ENCODE measurements at regions of chr3 and their contacts with region 1.

Region 1: DNA sequence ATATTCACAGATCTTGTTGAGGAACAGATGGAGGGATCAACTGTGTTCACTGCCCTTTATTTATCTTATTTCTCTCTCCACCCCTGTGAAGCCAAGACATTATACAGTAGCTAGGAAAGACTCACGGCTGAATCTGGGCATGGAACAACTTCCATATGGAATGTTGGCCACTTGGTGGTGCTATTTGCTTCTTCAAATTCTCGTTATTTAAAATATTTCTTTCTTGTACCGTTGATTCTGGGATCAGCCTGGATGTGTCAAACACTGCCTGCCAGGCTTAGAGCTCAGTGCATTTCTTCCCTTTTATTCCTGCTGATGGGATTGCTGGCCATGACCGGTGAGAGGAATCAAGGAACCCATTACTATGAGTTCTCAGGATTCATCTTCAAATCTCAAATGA is 17.5 kb upstream of the GASK1A start:
- DNase-seq: peak; percentile 6 to 30
- ATAC-seq: peak; percentile 66; a peak in 5 of 6 replicates
- H3K4me3 ChIP-seq: no peak overlapping the region
- H3K27ac ChIP-seq: no peak overlapping the region
- H3K4me1 ChIP-seq: no peaks in the 10 kb centered on the region
- CTCF ChIP-seq: peak; percentile 64
- EP300 ChIP-seq: no peak
- POLR2A ChIP-seq: no peak
- RAD21 ChIP-seq: peak; percentile 62 to 66

Region 2: GRCh38 chr3:42942693-42943092 is 18.9 kb before region 1 on chr3:
- CTCF ChIA-PET with region 1: no interaction called
- POLR2A ChIA-PET with region 1: no interaction called
- DNase-seq: no peak
- ATAC-seq: no peak
- H3K4me3 ChIP-seq: no peak overlapping the region
- H3K27ac ChIP-seq: no peak overlapping the region
- H3K4me1 ChIP-seq: no peaks in the 10 kb centered on the region
- CTCF ChIP-seq: no peak
- EP300 ChIP-seq: no peak
- POLR2A ChIP-seq: no peak
- RAD21 ChIP-seq: no peak

Region 3: GRCh38 chr3:42979044-42979972 is 17.7 kb after region 1 on chr3 and contains the start of gene GASK1A:
- CTCF ChIA-PET with region 1: interaction called, 12 read pairs
- POLR2A ChIA-PET with region 1: no interaction called
- DNase-seq: no peak
- ATAC-seq: peak; percentile 47 to 64; a peak in 4 of 6 replicates
- H3K4me3 ChIP-seq: peak within 1 kb of the TSS; percentile 39
- H3K27ac ChIP-seq: no peak within 1 kb of the TSS
- H3K4me1 ChIP-seq: no peaks in the 10 kb centered on the region
- CTCF ChIP-seq: no peak
- EP300 ChIP-seq: no peak
- POLR2A ChIP-seq: no peak
- RAD21 ChIP-seq: no peak
- polyA plus RNA-seq, gene GASK1A: not detected in 2 replicates

Region 4: DNA sequence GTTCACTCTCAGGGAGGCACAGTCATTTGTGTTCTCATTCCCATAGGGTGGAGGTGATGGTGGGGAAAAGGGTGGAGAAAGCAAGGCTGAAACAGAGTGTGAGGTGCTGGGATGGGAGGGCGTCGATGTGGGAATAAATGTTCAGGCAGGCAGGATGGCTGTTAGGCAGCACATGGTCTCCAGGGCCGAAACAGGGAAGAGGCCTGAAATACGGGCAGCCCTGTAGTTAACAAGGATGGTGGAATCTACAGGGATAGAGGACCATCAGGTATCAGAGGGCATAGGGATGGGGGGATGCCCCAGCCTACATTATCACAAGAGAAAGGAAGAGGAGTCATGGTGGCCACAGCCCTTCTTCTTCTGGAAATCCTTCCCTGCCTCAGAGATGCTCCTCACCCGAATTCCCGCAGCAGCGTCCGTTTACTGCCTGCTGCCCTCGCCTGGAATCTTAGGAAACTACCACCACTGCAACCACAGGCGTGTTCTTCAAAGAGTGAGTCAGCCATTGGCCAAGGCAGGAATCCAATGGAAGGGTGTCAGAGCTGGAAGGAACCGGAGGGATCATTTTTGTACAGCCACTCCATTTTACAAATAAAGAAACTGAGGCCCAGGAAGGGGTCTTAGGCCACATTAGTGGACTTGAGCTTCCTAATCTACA is 194.0 kb after region 1 on chr3:
- CTCF ChIA-PET with region 1: interaction called, 33 read pairs
- POLR2A ChIA-PET with region 1: no interaction called
- DNase-seq: peak; percentile 50 to 54
- ATAC-seq: peak; percentile 93 to 98
- H3K4me3 ChIP-seq: no peak overlapping the region
- H3K27ac ChIP-seq: no peak overlapping the region
- H3K4me1 ChIP-seq: no peaks in the 10 kb centered on the region
- CTCF ChIP-seq: peak; percentile 36; the same call in 2 of the 3 replicates
- EP300 ChIP-seq: no peak
- POLR2A ChIP-seq: no peak
- RAD21 ChIP-seq: peak; percentile 42 to 57; a peak in 3 of 5 replicates

Region 5: DNA sequence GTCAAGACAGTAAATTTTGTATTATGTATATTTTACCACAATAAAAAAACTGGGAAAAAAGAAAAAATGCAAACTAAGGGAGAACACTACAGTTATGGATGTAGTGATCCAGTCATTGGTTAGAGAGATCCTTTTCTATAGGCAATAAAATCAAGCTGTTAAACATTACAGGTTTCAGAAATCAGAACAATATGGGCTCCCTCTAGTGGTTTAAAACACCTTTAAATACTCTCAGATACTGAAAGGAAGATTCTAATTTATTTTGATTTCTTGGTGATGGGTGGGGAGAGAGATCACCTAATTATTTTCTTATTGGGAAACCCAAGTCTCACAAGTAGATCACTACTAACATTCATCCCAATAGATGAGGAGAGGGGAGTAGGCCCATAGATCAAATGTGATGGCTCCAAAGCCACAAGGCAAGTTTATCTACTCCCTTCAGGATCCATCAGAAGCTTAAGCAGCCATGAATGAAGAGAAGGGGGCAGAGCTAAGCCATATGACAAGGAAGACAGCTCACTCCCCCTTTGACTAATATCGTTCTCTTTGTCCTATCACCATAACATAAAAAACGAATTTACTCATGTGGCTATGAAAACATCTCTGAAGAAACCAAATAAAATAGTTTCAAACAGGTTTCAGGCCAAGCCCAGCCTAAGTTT is 541.6 kb after region 1 on chr3:
- CTCF ChIA-PET with region 1: interaction called, 14 read pairs
- POLR2A ChIA-PET with region 1: no interaction called
- DNase-seq: peak in 1 of 2 experiments; percentile 13
- ATAC-seq: peak in 1 of 2 experiments; percentile 68; a peak in 3 of 6 replicates
- H3K4me3 ChIP-seq: no peak overlapping the region
- H3K27ac ChIP-seq: no peak overlapping the region
- H3K4me1 ChIP-seq: peaks cover 1% of the 10 kb centered on the region; the same call in 2 of the 3 replicates
- CTCF ChIP-seq: peak; percentile 58
- EP300 ChIP-seq: no peak
- POLR2A ChIP-seq: no peak
- RAD21 ChIP-seq: peak; percentile 46 to 57; a peak in 4 of 5 replicates

Measured in A549 (cell line).